T-cell (primary cell): ENCODE measurements at regions of chr17 and their contacts with region 1.

Region 1: DNA sequence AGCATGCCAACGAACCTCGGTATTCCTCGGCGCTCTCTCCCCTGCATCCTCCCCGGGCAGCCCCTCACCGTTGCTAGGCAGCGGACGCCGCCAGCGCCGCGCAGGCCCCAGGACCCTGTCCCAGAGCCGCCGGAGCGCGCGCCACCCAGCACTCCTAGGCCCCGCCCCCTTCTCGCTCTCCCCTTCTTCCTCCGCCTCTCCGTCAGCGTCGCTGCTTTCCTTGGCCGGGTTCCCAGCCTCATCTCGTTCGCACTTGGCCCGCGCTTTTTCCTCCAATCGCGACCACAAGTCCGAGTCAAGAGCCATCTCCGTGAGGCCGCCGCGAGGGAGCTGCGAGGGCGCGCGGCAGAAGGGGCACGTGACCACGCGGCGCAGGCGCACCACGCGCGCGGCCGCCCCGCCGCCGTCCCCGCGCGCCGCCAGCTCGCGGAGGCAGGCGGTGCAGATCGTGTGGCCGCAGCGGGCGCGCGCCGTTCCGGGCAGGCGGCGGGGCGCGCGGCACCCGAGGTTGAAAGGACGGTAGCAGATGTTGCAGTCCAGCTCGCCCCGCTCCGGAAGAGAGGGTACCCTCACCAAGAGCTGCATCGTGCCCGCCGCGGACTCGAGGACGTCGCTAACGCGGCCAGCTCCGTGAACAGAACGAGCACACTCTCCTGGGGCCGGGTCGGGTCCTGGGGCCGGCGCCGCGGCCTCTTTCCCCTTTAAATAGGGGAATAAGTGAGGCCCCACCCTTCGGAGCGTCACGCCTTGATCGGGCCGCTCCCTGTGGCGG is at the start of gene RNF227:
- DNase-seq: peak; percentile 50 to 91 (median 68)
- ATAC-seq: peak; percentile 81 to 82 (median 82)
- H3K4me3 ChIP-seq: peak within 1 kb of the TSS; percentile 65 to 77
- H3K4me3 Mint-ChIP-seq: peak within 1 kb of the TSS; percentile 83 to 92 (median 91)
- H3K27ac ChIP-seq: peak within 1 kb of the TSS; percentile 85
- H3K27ac Mint-ChIP-seq: peak within 1 kb of the TSS; percentile 90 to 94
- H3K4me1 ChIP-seq: peaks cover 18 to 21% of the 10 kb centered on the region in 2 experiments
- H3K4me1 Mint-ChIP-seq: peaks cover 27 to 36% (median 32%) of the 10 kb centered on the region in 3 donors
- H3K27me3 ChIP-seq: no peaks in the 10 kb centered on the region
- H3K27me3 Mint-ChIP-seq: no peaks in the 10 kb centered on the region
- total RNA-seq, gene RNF227: 2.9 to 7.3 (median 5.2) TPM

Region 2: DNA sequence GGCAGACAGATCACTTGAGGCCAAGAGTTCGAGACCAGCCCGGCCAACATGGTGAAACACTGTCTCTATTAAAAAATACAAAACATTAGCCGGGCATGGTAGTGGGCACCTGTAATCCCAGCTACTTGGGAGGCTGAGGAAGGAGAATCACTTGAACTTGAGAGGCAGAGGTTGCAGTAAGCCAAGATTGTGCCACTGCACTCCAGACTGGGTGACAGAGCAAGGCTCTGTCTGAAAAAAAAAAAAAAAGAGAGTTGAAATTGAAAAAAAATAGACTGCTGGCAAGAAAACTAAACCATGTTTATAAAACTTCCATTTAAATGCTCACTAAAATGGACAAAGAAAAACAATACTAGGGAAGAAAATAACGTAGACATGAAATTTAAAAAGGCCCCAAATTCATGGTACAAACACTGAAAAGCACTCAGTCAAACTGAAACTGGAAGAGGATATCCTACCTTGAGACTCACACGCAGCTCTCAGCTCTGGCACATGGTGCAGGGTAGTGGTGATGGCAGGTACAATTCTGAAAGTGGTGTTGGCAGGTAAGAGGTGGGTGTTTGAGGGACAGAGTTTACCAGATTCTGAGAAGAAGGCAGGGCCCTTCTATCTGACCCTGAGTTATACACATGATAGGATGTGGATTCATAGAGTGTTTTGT is 35.5 kb after region 1 on chr17:
- CTCF ChIA-PET with region 1: no interaction called
- POLR2A ChIA-PET with region 1: no interaction called
- DNase-seq: peak in 1 of 35 experiments; percentile 24
- ATAC-seq: peak; percentile 75 to 80 (median 75)
- H3K4me3 ChIP-seq: no peak overlapping the region
- H3K4me3 Mint-ChIP-seq: peak overlapping the region in 1 of 3 donors; percentile 18
- H3K27ac ChIP-seq: no peak overlapping the region
- H3K27ac Mint-ChIP-seq: peak overlapping the region; percentile 63 to 84
- H3K4me1 ChIP-seq: no peaks in the 10 kb centered on the region
- H3K4me1 Mint-ChIP-seq: peaks cover 0 to 8% (median 5%) of the 10 kb centered on the region in 3 donors
- H3K27me3 ChIP-seq: no peaks in the 10 kb centered on the region
- H3K27me3 Mint-ChIP-seq: no peaks in the 10 kb centered on the region

Region 3: DNA sequence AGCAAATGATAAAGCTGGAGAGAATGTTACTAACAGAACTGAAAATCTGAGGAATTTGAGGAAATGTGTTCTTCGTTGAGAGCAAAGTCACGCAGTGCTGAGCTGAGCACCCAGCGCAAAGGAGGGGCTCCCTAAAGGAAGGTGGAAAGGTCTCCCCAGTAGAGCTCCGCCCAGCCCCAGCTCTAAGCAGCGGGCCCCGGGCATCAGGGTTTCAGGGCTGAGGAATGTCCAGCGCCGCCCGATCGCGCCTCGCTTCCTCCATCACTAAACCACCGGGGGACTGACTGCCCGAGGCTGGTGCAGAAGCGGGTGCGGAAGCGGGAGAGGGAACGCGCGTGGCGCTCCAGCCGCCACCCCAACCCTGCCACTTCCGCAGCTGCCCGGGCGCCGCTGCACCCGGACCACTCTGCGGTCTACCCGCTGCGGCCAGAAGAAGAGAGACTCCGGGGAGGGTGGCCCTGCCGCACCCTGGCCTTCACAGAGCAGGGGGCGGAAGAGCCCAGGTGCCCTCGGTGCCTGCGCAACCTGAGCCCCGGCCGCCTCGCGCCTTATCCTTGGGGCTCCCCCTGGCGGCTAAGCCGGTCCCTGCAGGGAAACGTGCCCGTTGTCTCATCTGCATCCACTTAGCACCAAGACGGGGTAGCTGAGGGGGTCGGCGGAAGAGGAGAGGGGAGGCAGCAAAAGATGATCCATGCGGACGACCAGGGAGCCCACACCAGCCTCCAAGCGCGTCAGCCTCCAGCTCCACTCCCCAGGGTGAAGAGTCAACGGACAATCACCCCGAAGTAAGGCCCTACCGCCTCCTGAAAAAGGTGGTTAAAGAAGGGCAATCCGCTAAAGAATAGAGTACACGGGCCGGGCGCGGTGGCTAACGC is 74.2 kb after region 1 on chr17:
- CTCF ChIA-PET with region 1: interaction called, 6 to 32 read pairs
- POLR2A ChIA-PET with region 1: interaction called in 1 of 2 experiments, 4 read pairs
- DNase-seq: peak; percentile 71 to 98 (median 89)
- ATAC-seq: peak; percentile 88 to 97 (median 93)
- H3K4me3 ChIP-seq: peak overlapping the region; percentile 49 to 55
- H3K4me3 Mint-ChIP-seq: peak overlapping the region; percentile 75 to 88 (median 78)
- H3K27ac ChIP-seq: peak overlapping the region; percentile 73
- H3K27ac Mint-ChIP-seq: peak overlapping the region; percentile 90
- H3K4me1 ChIP-seq: peaks cover 2 to 15% of the 10 kb centered on the region in 2 experiments
- H3K4me1 Mint-ChIP-seq: peaks cover 18 to 26% (median 20%) of the 10 kb centered on the region in 3 donors
- H3K27me3 ChIP-seq: peaks cover 0 to 7% of the 10 kb centered on the region in 2 experiments
- H3K27me3 Mint-ChIP-seq: peaks cover 0 to 4% of the 10 kb centered on the region in 2 donors

Region 4: DNA sequence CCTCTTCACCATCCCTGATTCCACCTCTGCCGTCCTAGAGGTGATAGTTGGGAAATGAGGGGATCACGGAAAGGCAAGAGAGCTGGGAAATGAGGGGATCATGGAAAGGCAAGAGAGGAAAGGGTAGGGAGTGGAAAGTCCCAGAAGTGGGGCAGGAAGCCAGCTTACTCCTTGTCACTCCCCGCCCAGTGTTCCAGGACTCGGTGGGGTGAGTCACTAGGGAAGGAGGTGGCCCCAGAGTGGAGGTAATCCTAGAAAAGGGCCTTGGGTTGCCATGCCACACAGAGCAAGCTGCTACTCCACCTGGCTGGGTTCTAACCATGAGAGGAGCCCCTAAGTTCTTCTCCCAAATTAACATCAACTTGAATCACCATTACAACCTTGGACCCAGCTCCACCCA is 187.8 kb after region 1 on chr17:
- CTCF ChIA-PET with region 1: no interaction called
- POLR2A ChIA-PET with region 1: no interaction called
- DNase-seq: no peak
- ATAC-seq: no peak
- H3K4me3 ChIP-seq: no peak overlapping the region
- H3K4me3 Mint-ChIP-seq: no peak overlapping the region
- H3K27ac ChIP-seq: no peak overlapping the region
- H3K27ac Mint-ChIP-seq: no peak overlapping the region
- H3K4me1 ChIP-seq: no peaks in the 10 kb centered on the region
- H3K4me1 Mint-ChIP-seq: no peaks in the 10 kb centered on the region
- H3K27me3 ChIP-seq: peaks cover 0 to 19% of the 10 kb centered on the region in 2 experiments
- H3K27me3 Mint-ChIP-seq: no peaks in the 10 kb centered on the region